ENCODE measurements at regions of chr10 and their contacts with region 1.

Region 1: DNA sequence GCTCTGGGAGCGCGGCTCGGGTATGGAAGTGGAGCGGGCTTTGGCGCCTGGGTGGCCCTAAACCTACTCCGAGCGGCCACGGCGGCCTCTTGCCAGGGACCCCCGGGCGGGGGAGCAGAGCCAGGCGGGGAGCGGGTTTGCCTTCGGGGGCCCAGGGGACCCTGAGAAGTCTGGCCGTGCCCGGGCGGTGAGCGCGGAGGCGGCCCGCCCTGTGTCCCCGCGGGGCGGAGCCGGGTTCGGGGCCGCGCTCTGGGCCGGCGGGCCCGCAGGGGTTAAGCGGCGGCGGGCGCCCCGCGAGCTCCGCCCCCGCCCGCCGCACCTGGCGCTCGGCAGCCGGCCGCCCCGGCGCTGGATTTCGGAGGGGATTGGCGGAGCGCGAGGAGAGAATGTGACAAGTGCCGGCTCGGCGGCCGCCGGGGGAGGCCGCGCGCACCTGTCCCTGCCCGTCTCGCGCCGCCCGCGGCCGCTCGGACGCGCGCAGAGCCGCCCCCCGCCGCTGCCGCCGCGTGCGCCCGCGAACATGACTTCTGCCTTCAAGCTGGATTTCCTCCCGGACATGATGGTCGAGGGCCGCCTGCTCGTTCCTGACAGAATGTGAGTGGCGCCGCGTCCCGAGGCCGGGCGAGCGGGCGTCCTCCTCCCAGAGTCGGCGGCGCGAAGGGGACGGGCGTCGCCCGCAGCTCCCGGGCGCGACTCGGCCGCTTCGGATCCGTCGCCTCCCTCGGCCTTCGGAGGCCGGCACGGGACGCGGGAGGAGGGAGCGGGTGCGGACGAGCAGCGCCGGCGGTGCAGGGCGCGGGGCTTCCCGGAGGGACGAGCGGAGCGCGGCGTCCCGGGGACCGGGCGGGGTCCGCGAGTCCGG is at the start of gene CELF2:
- DNase-seq: peak; percentile 29 to 51 (median 49)
- H3K4me3 ChIP-seq: peak within 1 kb of the TSS in 1 of 2 donors; percentile 32
- H3K4me3 Mint-ChIP-seq: peak within 1 kb of the TSS; percentile 74 to 89 (median 84)
- H3K27ac ChIP-seq: no peak within 1 kb of the TSS
- H3K27ac Mint-ChIP-seq: peak within 1 kb of the TSS in 3 of 7 donors; percentile 9 to 44 (median 20)
- H3K4me1 ChIP-seq: peaks cover 11% of the 10 kb centered on the region
- H3K4me1 Mint-ChIP-seq: peaks cover 7 to 22% (median 12%) of the 10 kb centered on the region in 4 donors
- H3K27me3 ChIP-seq: peaks cover 44% of the 10 kb centered on the region
- H3K27me3 Mint-ChIP-seq: peaks cover 51 to 63% of the 10 kb centered on the region in 2 donors
- total RNA-seq, gene CELF2: 173 to 180 TPM

Region 2: GRCh38 chr10:11068861-11069633 is 51.2 kb after region 1 on chr10:
- CTCF ChIA-PET with region 1: no interaction called
- POLR2A ChIA-PET with region 1: no interaction called
- intact Hi-C with region 1: loop called (anchors 5 kb)
- DNase-seq: no peak
- H3K4me3 ChIP-seq: no peak overlapping the region
- H3K4me3 Mint-ChIP-seq: no peak overlapping the region
- H3K27ac ChIP-seq: no peak overlapping the region
- H3K27ac Mint-ChIP-seq: no peak overlapping the region
- H3K4me1 ChIP-seq: no peaks in the 10 kb centered on the region
- H3K4me1 Mint-ChIP-seq: no peaks in the 10 kb centered on the region
- H3K27me3 ChIP-seq: no peaks in the 10 kb centered on the region
- H3K27me3 Mint-ChIP-seq: peaks cover 6 to 10% of the 10 kb centered on the region in 2 donors

Region 3: GRCh38 chr10:11106621-11107374 is 89.0 kb after region 1 on chr10:
- CTCF ChIA-PET with region 1: no interaction called
- POLR2A ChIA-PET with region 1: no interaction called
- intact Hi-C with region 1: loop called (anchors 10 kb)
- DNase-seq: no peak
- H3K4me3 ChIP-seq: no peak overlapping the region
- H3K4me3 Mint-ChIP-seq: no peak overlapping the region
- H3K27ac ChIP-seq: no peak overlapping the region
- H3K27ac Mint-ChIP-seq: peak overlapping the region in 1 of 7 donors; percentile 45
- H3K4me1 ChIP-seq: peaks cover 15% of the 10 kb centered on the region
- H3K4me1 Mint-ChIP-seq: peaks cover 16 to 23% (median 17%) of the 10 kb centered on the region in 4 donors
- H3K27me3 ChIP-seq: no peaks in the 10 kb centered on the region
- H3K27me3 Mint-ChIP-seq: no peaks in the 10 kb centered on the region

Region 4: DNA sequence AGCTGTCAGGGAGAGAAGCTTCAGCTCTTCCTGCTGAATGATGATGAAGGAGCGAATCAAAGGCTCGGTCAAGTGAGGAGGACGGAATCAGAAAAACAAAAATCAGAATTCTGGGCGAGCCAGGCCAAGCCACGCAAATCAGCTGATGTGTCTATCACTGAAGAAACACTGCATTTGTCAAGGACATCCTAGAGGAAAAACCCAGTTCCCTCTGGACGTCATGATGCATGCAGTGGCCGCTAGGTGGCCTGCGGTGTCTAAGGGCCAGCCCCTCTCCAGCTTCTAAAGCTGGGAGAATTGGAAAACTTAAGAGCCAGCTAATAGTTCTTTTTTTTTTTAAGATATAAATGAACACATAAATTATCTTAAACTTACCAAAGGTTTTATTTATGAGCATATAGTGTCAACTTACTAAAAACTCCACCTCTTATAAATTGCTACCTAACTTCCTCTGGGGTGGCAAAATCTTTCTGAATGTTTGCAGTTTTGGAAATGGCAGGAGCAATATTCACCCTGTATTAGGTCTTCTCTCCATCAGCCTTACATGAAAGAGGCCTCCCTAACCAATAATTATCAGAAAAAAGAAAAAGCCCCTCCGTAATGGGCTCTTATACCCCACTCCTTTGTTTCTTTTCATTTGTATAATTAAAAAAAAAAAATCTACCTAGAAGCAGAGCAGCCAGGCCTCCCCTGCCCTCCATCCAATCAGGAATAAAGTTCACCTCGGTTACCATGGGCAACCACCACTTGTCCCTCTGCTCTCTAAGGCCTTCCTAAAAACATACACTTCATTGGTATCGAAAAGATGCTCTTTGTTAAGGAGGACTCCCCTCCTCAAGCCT is 406.9 kb after region 1 on chr10:
- CTCF ChIA-PET with region 1: no interaction called
- POLR2A ChIA-PET with region 1: no interaction called
- intact Hi-C with region 1: no loop called
- DNase-seq: no peak
- H3K4me3 ChIP-seq: no peak overlapping the region
- H3K4me3 Mint-ChIP-seq: peak overlapping the region in 2 of 8 donors; percentile 5 to 50
- H3K27ac ChIP-seq: no peak overlapping the region
- H3K27ac Mint-ChIP-seq: peak overlapping the region in 4 of 7 donors; percentile 29 to 52 (median 36)
- H3K4me1 ChIP-seq: peaks cover 17% of the 10 kb centered on the region
- H3K4me1 Mint-ChIP-seq: peaks cover 10 to 32% (median 14%) of the 10 kb centered on the region in 4 donors
- H3K27me3 ChIP-seq: no peaks in the 10 kb centered on the region
- H3K27me3 Mint-ChIP-seq: no peaks in the 10 kb centered on the region

Measured in CD4-positive, alpha-beta memory T cell (primary cell).